ENCODE measurements at regions of chr7 and their contacts with region 1.

Region 1: DNA sequence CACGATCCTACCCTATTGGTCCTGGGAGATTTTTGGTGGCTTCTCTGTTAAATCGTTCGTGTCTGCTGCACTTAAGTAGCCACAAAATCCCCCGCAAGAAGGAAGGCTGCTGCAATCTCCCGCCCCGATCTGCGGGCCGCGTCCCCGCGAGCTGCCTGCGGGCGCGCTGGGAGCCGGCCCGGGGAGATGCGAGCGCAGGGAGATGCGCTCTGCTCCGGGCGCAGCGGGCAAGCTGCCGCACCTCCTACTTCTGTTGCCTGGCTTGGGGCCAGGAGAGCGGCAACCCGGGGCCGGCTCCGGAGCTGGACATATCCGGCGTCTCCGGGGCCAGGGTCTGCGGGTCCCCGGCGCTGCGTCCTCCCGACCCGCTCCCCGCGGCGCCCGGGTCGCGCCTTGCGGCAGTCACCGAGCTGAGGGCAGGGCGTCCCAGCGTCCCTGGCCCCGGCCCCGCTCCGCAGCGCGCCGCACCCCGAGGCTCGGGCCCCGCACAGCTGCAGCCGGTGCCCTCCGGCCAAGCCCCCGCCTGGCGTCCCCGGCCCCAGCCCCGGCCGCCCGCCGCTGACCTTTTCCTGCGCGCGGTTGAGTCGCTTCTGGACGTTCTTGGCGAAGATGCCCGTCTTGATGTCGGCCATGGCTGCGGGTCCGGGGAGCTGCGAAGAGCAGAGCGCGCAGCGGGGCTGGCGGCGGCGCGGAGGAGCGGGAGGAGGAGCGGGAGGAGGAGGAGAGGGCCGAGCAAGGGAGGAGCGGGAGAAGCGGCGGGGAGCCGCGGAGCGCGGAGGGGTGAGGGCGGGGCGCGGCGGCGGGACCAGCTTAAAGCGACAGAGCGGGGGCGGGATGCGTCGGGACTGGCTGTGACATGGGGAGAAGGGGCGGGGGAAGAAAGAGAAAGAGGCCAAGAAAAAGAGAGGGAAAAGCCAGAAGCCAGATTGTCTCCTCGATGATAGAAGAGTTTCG is at the start of gene AMPH:
- DNase-seq: peak; percentile 69
- H3K4me3 ChIP-seq: peak within 1 kb of the TSS; percentile 42
- H3K27ac ChIP-seq: no peak within 1 kb of the TSS
- H3K4me1 ChIP-seq: no peaks in the 10 kb centered on the region
- H3K27me3 ChIP-seq: peaks cover 38% of the 10 kb centered on the region
- CTCF ChIP-seq: no peak
- total RNA-seq, gene AMPH: 1.6 and 2.1 TPM in 2 replicates

Region 2: DNA sequence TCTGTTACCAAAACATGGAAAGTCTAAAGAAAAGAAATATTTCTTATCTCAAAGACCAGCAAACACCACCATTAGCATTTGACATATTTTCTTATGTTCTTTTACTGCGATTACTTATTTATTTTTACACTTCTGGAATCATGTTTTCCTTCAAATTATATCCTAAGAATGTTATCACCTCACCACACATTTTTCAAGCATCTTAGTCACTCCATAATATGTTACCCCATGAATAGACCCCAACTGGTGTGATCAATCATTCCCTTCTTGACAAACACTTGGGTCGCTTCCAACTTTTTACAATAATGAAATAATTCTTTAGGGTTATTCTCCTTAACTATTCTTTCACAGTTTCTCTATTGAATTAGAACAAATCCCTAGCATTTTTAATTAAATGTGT is 67.3 kb before region 1 on chr7:
- CTCF ChIA-PET with region 1: no interaction called
- POLR2A ChIA-PET with region 1: no interaction called
- intact Hi-C with region 1: no loop called
- DNase-seq: no peak
- H3K4me3 ChIP-seq: no peak overlapping the region
- H3K27ac ChIP-seq: no peak overlapping the region
- H3K4me1 ChIP-seq: no peaks in the 10 kb centered on the region
- H3K27me3 ChIP-seq: no peaks in the 10 kb centered on the region
- CTCF ChIP-seq: no peak

Region 3: GRCh38 chr7:38600746-38601145 is 30.3 kb before region 1 on chr7:
- CTCF ChIA-PET with region 1: no interaction called
- POLR2A ChIA-PET with region 1: interaction called, 11 read pairs
- intact Hi-C with region 1: no loop called
- DNase-seq: no peak
- H3K4me3 ChIP-seq: no peak overlapping the region
- H3K27ac ChIP-seq: no peak overlapping the region
- H3K4me1 ChIP-seq: no peaks in the 10 kb centered on the region
- H3K27me3 ChIP-seq: no peaks in the 10 kb centered on the region
- CTCF ChIP-seq: no peak

Region 4: DNA sequence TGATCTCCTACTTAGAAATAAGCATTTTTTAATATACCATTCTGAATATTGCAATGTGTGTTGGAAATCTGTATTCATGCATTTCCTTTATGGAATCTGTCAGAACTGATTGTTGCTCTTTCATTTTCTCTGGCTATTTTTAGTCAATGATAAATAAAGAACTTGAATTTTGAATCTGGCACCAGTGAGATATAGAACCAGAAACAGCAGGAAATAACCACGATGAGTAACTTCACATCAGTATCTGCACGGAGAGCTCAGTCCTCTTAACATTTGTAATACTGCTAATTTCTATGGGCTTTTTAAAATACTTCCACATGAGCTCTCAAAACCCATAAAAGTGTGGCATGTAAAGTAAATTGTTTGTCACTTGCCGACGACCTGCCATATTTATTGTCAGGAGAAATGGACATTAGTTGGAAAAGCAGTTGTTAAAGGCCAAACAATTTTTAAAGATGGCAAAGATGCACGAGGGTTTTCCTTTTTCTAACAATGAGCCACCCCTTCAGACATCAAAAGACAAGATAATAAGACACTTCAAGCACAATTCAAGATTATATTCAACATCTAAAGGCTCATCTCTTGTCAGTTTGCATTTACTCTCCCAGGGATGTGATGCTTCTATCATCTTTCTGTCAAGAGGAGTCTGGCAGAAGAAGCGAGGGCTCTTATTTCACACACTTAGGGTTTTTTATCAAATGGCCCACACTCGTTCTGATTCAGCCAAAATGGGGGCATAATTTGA is 465.1 kb after region 1 on chr7:
- CTCF ChIA-PET with region 1: no interaction called
- POLR2A ChIA-PET with region 1: interaction called, 12 read pairs
- intact Hi-C with region 1: no loop called
- DNase-seq: no peak
- H3K4me3 ChIP-seq: no peak overlapping the region
- H3K27ac ChIP-seq: no peak overlapping the region
- H3K4me1 ChIP-seq: no peaks in the 10 kb centered on the region
- H3K27me3 ChIP-seq: peaks cover 25% of the 10 kb centered on the region
- CTCF ChIP-seq: no peak